ENCODE measurements at regions of chr15 and their contacts with region 1.

Region 1: DNA sequence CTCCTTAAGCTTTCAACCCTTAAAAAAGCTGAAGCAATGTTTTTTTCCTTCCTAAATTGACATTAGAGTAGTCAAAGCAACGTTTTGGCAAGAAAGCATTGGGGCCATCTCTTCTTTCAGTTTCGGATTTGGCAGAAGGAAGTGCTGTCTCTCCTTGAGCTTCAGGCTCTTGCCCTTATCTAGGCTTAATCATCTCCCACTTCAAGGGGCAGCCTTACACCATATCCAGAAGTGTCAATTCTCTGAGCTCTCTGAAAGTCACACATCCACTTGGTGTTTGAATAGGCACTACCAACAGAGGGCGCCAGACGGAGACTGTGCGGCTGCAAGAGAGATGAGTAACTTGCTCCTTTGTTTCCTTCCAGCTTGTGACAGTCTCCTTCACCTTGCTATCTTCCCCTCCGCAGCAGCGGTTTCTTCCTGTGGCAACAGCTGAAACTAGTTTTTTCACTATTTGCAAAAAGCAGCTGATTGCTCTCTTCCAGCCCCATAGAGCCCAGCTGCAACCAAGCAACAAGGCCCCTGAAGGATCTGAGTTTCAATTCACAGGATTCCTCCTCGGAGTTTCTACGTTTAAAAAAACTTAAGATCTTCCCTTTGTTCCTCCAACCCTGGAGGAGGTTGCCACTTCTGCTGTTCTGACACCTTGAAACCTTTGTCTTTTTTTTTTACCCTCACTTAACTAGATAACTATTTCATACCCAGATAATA is 147.0 kb upstream of the SLCO3A1 start:
- DNase-seq: peak; percentile 72
- ATAC-seq: peak; percentile 85

Region 2: DNA sequence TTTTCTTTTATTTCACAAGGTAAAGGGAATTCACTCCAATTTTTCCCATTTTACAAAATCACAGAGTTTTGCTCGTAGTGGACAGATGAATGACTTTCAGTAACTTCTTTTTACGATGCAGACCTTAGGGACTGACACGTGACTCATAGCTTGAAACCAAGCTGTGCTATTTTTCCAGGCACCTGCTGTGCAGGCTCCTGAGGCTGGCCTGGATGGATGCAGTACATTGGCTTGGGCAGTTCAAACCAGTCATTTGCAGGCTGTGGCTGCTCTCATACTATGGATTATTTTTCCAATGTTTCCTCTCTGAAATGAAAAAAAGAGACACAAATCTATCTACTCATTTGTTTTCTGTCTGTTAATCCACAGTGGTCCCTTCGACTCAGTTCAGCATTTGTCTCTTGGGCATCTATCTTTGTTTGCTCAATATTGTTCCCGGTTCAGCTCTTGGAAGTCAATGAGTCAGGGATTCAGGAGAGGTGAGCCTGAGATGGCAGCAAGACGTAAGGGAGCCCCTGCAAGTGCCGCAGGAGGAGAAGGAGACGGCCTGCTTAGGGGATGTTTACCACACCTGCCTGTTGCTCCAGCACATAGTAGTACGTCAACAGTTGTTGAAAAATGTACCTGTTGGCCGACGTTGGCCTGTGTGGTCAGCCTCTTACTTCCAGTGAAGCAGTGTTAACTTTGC is 513.6 kb before region 1 on chr15:
- intact Hi-C with region 1: no loop called
- DNase-seq: no peak
- ATAC-seq: no peak

Region 3: DNA sequence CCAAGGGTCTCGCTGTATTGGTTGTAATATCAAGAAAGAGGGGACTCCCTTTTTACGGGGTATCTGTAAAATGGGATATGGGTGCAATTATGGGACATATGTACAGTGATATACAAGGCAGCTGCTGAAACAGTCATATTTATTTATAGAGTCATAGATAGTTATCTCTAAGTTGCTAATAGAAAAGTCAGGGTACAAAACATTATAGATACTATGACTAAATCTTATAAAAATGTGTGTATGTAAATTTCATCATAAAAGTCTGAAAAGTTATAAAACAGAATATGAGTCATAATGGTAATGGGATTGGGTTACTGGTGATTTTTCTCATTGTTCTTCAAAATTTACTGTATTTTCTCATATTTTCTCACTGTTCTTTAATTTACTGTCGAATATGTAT is 197.8 kb before region 1 on chr15:
- intact Hi-C with region 1: no loop called
- DNase-seq: no peak
- ATAC-seq: no peak

Region 4: DNA sequence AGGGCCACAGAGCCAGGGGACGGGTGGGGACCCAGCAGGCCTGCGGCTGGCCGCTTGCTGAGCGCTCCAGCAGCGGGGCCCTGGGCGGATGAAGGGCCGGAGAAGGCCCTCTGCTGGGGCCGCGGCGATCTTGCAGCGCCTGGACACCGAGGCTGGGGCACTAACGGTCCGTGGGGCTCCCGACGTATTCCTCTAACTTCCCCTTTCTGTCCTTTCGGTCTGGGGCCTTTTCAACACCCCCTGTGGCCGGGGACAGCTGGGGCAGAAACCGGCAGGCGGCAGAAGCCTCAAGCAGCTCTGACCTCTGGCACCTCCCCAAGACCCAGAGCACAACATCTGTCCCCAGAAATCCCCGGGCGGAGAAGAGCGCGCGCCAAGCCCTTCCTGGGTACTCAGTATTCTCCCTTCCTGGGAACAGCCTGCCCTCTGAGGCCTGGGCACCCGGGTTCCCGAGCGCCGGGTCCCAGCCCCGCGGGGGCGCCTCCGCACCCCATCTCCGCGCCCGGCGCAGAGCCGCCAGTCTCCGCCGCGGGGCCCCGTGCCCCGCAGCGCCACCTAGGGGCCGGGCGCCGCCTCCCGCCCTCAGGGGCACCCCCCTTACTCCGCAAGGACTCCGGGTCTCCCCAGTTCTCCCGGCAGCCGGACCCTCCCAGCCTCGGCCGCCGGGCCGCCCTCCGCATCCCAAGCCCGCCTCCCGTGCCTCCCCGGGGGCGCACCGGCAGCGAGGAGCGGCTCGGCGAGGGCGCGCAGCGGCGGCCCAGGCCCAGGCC is 146.4 kb after region 1 on chr15:
- intact Hi-C with region 1: loop called (anchors 5 kb)
- DNase-seq: peak; percentile 89
- ATAC-seq: peak; percentile 86

Region 5: DNA sequence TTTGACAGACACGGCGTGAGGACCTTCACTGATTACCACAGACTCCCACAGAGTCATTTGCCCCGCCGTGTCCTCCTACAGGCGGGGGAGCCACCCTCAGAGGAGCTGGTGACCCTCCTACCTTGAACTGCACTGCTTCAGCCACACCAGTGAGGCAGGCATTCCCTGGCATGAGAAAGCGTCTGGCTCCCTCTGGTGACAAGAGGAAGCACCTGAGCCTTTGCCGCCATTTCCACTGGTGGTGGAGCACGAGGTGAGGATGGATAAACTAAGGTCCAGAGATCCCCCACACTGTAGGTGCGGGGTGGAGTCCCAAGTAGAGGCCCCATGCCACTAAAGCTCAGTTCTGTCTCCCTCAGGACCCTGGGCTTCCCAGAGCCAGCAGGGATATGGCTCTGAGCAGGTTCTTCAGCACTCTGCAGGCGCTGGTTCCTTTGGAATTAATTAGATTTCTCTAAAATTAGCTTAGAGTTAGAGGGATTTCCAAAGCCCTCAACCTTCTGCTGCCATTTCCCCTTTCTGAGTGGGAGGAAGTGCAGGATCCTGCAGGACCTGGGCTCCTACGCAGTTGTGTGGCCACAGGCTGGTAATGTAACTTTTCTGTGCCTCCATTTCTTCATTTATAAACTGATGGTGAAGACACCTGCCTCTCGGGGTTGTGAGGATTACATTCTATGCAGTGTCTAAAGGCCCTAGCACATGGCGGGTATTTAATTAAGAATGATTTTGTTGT is 371.0 kb after region 1 on chr15:
- intact Hi-C with region 1: loop called (anchors 2 kb)
- DNase-seq: peak; percentile 83
- ATAC-seq: peak; percentile 78

Measured in Right ventricle myocardium superior (tissue), 1 donor.